Sciatic nerve (tissue), 2 donors: ENCODE measurements at regions of chr17 and their contacts with region 1.

Region 1: DNA sequence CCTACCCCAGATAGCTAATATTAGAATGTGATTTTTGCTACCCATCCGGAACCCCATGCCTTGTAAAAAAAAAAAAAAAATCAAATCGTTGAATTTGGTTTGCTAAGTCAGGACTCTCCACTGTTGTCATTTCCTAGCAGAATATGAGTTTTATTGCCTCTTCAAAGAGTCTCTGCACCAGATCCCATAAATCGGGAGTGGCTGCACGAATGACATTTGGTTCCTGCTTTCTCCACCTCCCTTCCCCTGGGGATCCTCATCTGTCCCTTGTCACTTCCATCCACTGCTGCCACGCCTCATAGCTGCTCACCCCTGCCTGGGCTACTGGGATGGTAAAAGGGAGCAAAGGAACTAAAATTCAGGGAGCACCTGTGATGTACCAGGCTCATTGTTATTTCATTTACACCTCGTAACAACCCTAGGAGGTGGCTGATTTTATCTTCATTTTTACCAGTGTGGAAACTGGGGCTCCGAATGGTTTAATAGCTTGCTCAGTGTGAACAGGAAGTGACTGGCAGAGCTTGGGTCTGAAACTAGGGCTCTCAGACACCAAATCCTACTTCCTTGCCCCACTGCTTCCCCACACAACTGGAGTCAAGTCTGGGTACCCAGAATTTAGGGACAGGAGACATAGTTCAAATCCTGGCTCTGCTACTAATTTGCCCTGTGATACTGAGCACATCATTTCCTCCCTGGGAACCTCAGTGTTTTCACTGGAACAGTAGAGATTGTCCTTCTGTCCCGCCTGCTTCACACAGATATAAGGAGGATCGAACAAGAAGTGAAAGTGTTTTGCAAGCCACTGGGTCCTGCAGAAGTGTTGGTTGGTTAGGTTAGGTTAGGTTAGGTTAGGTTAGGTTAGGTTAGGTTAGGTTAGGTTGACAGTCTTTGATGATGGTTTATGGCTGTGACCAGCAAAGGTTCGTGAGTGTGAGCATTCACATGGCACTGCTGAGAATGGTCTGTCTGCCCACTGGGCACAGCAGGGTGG is 585 bp upstream of the KRT36 start:
- DNase-seq: no peak
- ATAC-seq: no peak

Region 2: DNA sequence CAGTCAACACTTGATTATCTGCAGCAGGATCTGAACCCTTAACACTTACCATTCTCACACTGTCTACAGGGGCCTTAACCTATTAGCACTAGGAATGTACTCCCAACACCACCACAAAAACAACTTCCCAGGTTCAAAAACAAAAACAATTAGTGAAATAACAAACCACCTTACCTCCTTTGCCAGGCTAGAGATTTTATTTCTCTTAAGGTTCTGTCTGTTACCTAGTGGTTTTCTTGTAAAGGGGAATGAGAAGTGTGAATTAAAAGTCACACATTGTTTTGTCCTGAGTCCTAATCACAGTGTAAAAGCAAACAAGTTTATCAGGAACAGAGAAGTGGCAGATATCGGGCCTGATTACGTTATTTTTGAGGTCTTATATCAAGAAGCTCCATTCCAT is 852.4 kb before region 1 on chr17:
- intact Hi-C with region 1: no loop called
- DNase-seq: no peak
- ATAC-seq: no peak

Region 3: DNA sequence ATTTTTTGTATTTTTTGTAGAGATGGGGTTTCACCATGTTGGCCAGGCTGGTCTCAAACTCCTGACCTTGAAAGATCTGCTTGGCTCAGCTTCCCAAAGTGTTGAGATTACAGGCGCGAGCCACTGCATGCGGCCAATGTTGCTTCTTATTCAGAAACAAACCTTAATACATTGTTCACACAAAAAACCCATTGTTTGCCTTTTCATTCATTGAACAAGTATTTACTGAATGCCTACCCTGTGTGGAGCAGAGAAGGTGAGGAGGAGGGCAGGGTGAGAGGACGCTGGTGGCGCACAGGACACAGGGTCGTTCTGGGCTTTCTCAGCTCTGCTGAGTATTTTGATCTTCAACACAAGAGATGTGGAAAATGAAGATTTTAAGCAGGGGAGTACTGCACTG is 544.9 kb before region 1 on chr17:
- intact Hi-C with region 1: no loop called
- DNase-seq: no peak
- ATAC-seq: no peak

Region 4: DNA sequence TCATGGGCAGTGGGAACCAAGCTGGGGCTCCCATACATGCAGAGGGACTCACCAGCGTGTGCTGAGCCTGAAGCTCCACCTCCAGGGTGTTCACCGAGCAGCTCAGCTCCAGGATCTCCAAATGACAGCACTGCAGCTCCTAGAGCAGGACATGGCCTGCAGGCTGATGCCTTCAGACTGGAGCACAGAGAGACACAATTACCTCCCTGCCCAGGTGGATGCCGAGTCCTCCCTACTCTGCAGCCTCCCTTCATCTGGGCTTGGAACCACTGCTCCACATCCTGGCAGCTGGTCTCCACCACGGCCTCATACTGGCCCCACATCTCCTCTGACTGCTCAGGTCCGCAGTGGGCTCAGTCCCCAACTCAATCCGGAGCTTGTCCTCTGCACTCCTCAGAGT is 41.3 kb before region 1 on chr17:
- intact Hi-C with region 1: loop called (anchors 1 kb)
- DNase-seq: no peak
- ATAC-seq: no peak